Adrenal gland (tissue), 19 donors: ENCODE measurements at regions of chr5 and their contacts with region 1.

Region 1: DNA sequence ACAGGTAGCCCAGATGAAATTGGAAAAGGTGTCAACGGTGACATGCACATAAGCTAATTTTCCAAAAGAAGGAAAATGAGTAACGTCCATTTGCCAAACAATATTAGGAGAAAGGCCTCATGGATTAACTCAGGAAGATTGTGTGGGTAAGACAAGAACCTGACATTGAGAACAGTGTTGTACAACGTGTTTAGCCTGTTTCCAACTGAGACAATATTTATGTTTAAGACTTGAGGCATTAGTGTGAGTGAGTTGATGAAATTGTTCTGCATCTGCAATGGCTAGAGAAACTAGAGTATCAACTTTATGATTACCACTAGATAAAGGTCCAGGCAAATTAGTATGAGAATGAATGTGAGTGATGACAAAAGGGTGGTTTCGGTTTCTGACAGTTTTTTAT is 191.3 kb upstream of the RAI14 start:
- DNase-seq: no peak
- H3K4me3 ChIP-seq: no peak overlapping the region
- H3K27ac ChIP-seq: no peak overlapping the region
- H3K4me1 ChIP-seq: no peaks in the 10 kb centered on the region
- H3K27me3 ChIP-seq: no peaks in the 10 kb centered on the region
- CTCF ChIP-seq: no peak
- POLR2A ChIP-seq: no peak

Region 2: GRCh38 chr5:33997331-33997983 is 467.4 kb before region 1 on chr5:
- intact Hi-C with region 1: loop called in 1 of 2 experiments (anchors 5 kb)
- DNase-seq: peak; percentile 69 to 94 (median 87)
- H3K4me3 ChIP-seq: no peak overlapping the region
- H3K27ac ChIP-seq: peak overlapping the region in 1 of 5 donors; percentile 23
- H3K4me1 ChIP-seq: no peaks in the 10 kb centered on the region
- H3K27me3 ChIP-seq: no peaks in the 10 kb centered on the region
- CTCF ChIP-seq: peak; percentile 48 to 82 (median 74)
- POLR2A ChIP-seq: no peak

Region 3: GRCh38 chr5:34669931-34670516 is 205.2 kb after region 1 on chr5:
- intact Hi-C with region 1: no loop called
- DNase-seq: no peak
- H3K4me3 ChIP-seq: no peak overlapping the region
- H3K27ac ChIP-seq: no peak overlapping the region
- H3K4me1 ChIP-seq: peaks cover 0 to 6% of the 10 kb centered on the region in 2 donors
- H3K27me3 ChIP-seq: no peaks in the 10 kb centered on the region
- CTCF ChIP-seq: no peak
- POLR2A ChIP-seq: no peak